ENCODE measurements at regions of chr11 and their contacts with region 1.

Region 1: GRCh38 chr11:44565211-44565952 is at the start of gene CD82:
- H3K4me3 Mint-ChIP-seq: peak within 1 kb of the TSS; percentile 81
- H3K27ac Mint-ChIP-seq: peak within 1 kb of the TSS; percentile 93
- H3K4me1 Mint-ChIP-seq: peaks cover 75% of the 10 kb centered on the region
- H3K27me3 Mint-ChIP-seq: peaks cover 32% of the 10 kb centered on the region

Region 2: DNA sequence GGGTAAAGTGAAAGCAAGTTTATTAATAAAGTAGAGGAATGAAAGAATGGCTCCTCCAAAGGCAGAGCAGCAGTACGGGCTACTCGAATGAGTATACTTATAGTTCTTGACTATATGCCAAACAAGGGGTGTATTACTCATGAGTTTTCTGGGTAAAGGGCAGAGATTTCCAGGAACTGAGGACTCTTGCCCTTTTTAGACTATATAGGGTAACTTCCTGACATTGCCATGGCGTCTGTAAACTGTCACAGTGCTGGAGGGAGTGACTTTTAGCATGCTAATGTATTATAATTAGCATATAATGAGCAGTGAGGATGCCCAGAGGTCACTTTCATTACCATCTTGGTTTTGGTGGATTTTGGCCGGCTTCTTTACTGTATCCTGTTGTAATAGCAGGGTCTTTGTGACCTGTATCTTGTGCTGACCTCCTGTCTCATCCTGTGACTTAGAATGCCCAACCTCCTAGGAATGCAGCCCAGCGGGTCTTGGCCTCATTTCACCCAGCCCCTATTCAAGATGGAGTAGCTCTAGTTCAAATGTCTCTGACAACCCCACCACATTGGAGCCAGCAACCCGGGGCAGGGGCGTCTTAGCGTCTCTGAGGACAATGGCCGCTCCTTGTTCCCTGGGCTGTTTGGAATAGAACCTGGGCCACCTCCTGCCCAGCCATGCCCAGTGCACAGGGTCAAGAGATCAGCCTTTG is 34.8 kb before region 1 on chr11:
- intact Hi-C with region 1: loop called (anchors 1 kb)
- H3K4me3 Mint-ChIP-seq: no peak overlapping the region
- H3K27ac Mint-ChIP-seq: peak overlapping the region; percentile 61
- H3K4me1 Mint-ChIP-seq: peaks cover 51% of the 10 kb centered on the region
- H3K27me3 Mint-ChIP-seq: peaks cover 24% of the 10 kb centered on the region

Region 3: GRCh38 chr11:44600839-44601383 is 35.5 kb after region 1 on chr11:
- intact Hi-C with region 1: no loop called
- H3K4me3 Mint-ChIP-seq: no peak overlapping the region
- H3K27ac Mint-ChIP-seq: no peak overlapping the region
- H3K4me1 Mint-ChIP-seq: peaks cover 6% of the 10 kb centered on the region
- H3K27me3 Mint-ChIP-seq: no peaks in the 10 kb centered on the region